Mammary epithelial cell (primary cell): ENCODE measurements at regions of chr10 and their contacts with region 1.

Region 1: GRCh38 chr10:16891375-16892313 is 74.4 kb upstream of the RSU1 start:
- DNase-seq: peak; percentile 95
- H3K4me3 ChIP-seq: peak overlapping the region; percentile 18 to 31 (median 21)
- H3K27ac ChIP-seq: peak overlapping the region; percentile 99
- H3K4me1 ChIP-seq: peaks cover 6% of the 10 kb centered on the region
- H3K27me3 ChIP-seq: no peaks in the 10 kb centered on the region
- CTCF ChIP-seq: peak; percentile 18 to 60

Region 2: DNA sequence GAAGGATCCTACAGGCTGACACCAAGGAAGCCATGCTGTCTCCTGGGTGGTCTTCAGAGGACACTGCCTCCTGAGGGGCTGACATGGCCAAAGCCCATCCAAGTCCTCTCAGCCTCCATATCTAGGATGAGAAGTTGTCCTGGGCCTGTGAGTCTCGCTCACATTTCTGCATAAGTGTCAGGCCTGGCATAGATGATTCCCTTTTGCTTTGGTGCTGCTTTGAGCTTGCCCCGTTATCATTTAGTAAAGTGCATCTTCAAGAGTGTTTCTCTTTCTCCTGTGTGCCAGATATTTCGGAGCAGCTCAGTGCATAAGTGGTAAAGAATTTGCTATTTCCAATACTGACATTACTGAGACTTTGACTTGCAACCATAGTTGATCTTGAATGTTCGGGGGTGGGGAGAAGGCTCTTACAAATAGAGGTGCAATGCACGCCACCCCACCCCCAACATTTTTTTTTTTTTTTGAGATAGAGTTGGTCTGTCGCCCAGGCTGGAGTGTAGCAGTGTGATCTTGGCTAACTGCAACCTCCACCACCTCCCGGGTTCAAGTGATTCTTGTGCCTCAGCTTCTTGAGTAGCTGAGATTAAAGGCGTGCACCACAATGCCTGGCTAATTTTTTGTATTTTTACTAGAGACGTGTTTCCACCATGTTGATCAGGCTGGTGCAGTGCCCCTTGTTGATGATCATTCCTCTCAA is 445.7 kb before region 1 on chr10:
- CTCF ChIA-PET with region 1: no interaction called
- dilution Hi-C with region 1: no loop called
- in situ Hi-C with region 1: no loop called
- intact Hi-C with region 1: no loop called
- DNase-seq: no peak
- H3K4me3 ChIP-seq: no peak overlapping the region
- H3K27ac ChIP-seq: no peak overlapping the region
- H3K4me1 ChIP-seq: peaks cover 10% of the 10 kb centered on the region
- H3K27me3 ChIP-seq: no peaks in the 10 kb centered on the region
- CTCF ChIP-seq: no peak

Region 3: DNA sequence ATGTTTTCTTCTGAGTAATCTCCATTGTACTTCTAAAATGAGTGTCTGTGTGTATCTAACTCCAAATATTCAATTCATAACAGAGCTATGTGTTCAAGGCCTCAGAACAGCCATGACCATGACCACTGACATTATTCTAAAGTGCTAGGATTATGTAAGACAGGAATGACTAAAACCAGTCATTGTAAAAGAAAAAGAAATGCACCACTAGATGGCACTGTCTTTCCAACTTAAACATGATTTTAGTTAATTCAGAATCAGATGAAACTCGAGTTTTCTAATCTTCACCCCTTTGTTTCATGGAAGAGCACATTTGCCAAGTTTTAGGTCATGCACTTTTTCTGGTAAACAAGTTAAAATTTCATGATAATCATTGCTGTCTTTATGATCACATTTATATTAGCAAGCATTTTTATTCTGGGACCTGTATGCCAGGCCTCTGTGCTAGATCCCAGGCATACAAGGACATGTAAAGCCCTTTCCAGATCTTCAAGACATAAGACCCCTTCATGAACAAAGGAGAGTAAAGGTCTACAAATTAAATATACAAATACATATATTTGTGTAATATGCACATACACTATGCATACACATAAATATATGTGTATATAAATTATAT is 48.3 kb before region 1 on chr10:
- CTCF ChIA-PET with region 1: no interaction called
- dilution Hi-C with region 1: no loop called
- in situ Hi-C with region 1: no loop called
- intact Hi-C with region 1: loop called (anchors 5 kb)
- DNase-seq: peak; percentile 61
- H3K4me3 ChIP-seq: no peak overlapping the region
- H3K27ac ChIP-seq: no peak overlapping the region
- H3K4me1 ChIP-seq: peaks cover 2% of the 10 kb centered on the region
- H3K27me3 ChIP-seq: no peaks in the 10 kb centered on the region
- CTCF ChIP-seq: peak; percentile 38 to 43

Region 4: GRCh38 chr10:17029581-17030271 is 138.1 kb after region 1 on chr10:
- CTCF ChIA-PET with region 1: no interaction called
- dilution Hi-C with region 1: no loop called
- in situ Hi-C with region 1: no loop called
- intact Hi-C with region 1: loop called (anchors 5 kb)
- DNase-seq: peak; percentile 65
- H3K4me3 ChIP-seq: no peak overlapping the region
- H3K27ac ChIP-seq: no peak overlapping the region
- H3K4me1 ChIP-seq: peaks cover 32% of the 10 kb centered on the region
- H3K27me3 ChIP-seq: no peaks in the 10 kb centered on the region
- CTCF ChIP-seq: no peak

Region 5: GRCh38 chr10:17062955-17063484 is 171.4 kb after region 1 on chr10:
- CTCF ChIA-PET with region 1: no interaction called
- dilution Hi-C with region 1: no loop called
- in situ Hi-C with region 1: no loop called
- intact Hi-C with region 1: loop called (anchors 1 kb)
- DNase-seq: peak; percentile 94
- H3K4me3 ChIP-seq: peak overlapping the region in 2 of 3 experiments; percentile 10 to 24
- H3K27ac ChIP-seq: peak overlapping the region; percentile 99
- H3K4me1 ChIP-seq: peaks cover 43% of the 10 kb centered on the region
- H3K27me3 ChIP-seq: no peaks in the 10 kb centered on the region
- CTCF ChIP-seq: no peak

Region 6: DNA sequence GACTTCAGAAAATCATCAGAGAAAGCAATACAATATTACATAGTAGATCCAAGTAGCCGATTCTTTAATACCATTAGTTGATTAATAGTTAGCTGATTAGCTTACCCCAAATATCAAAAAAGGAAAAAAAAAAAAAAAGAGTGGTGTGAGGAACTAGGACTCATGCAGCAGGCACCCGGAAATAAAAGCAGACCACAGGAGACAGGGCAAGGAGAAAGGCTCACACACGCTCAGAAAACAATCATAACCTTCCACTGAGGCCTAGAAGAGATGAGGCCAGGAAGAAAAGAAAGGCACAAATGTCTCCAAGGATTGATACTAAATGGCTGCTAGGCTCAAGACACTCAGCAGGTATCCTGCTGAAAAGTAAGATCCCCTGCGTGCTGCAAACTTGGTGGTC is 283.9 kb after region 1 on chr10:
- CTCF ChIA-PET with region 1: no interaction called
- dilution Hi-C with region 1: no loop called
- in situ Hi-C with region 1: no loop called
- intact Hi-C with region 1: loop called (anchors 1 kb)
- DNase-seq: no peak
- H3K4me3 ChIP-seq: no peak overlapping the region
- H3K27ac ChIP-seq: no peak overlapping the region
- H3K4me1 ChIP-seq: no peaks in the 10 kb centered on the region
- H3K27me3 ChIP-seq: no peaks in the 10 kb centered on the region
- CTCF ChIP-seq: no peak

Region 7: DNA sequence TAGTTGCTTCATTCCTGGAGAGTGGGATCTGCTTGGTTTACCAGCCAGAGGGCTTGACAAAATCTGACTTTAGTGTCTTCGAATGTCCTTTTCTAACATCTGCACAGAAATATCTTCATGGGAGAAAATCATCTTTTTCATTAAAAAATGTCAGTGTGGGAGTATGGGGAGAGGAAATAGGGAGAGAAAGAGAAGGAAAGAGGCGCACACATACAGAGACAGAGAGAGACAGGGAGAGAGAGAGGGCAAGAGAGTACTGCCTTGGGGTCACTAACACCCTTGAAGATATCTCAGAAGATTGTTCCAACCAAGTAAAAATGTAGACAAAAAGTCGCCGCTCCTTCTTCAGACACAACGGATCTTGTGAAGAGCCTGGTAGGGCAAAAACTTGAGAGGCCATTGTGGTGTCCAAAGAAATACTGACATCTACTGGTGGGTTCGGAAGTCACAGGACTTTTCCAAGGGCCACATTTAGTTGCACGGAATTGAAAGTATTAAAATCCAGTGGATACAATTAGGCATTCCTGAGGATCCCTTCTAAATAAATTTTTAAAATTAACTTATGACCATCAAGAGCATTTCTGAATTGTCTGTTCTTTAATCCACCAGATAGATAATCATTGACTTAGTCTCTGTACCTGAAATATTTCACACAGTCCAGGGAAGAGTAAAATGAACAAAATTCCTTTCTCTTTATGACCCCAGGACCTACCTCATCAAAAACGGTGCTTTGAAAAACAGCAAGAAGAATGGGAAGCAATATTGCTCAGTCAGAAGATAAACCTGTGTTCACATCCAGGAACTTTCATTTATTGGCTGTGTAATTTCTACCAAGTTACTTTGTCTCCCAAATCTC is 366.1 kb after region 1 on chr10:
- CTCF ChIA-PET with region 1: no interaction called
- dilution Hi-C with region 1: no loop called
- in situ Hi-C with region 1: no loop called
- intact Hi-C with region 1: loop called (anchors 2 kb)
- DNase-seq: peak; percentile 58
- H3K4me3 ChIP-seq: no peak overlapping the region
- H3K27ac ChIP-seq: no peak overlapping the region
- H3K4me1 ChIP-seq: no peaks in the 10 kb centered on the region
- H3K27me3 ChIP-seq: no peaks in the 10 kb centered on the region
- CTCF ChIP-seq: peak; percentile 83 to 86